GM12878 (cell line): ENCODE measurements at regions of chr6 and their contacts with region 1.

Region 1: GRCh38 chr6:136927292-136927691 is 5.2 kb downstream of the SLC35D3 start:
- DNase-seq: no peak
- ATAC-seq: peak; percentile 87
- H3K4me3 ChIP-seq: no peak overlapping the region
- H3K27ac ChIP-seq: no peak overlapping the region
- H3K4me1 ChIP-seq: no peaks in the 10 kb centered on the region
- H3K27me3 ChIP-seq: peaks cover 13% of the 10 kb centered on the region in 2 experiments
- CTCF ChIP-seq: peak; percentile 50 to 74 (median 55)
- EP300 ChIP-seq: no peak
- POLR2A ChIP-seq: no peak
- RAD21 ChIP-seq: peak; percentile 66

Region 2: GRCh38 chr6:136582711-136583471 is 344.4 kb before region 1 on chr6:
- CTCF ChIA-PET with region 1: no interaction called
- POLR2A ChIA-PET with region 1: no interaction called
- RAD21 ChIA-PET with region 1: no interaction called
- SMC1A ChIA-PET with region 1: no interaction called
- in situ Hi-C with region 1: no loop called
- intact Hi-C with region 1: loop called (anchors 10 kb)
- DNase-seq: no peak
- ATAC-seq: peak; percentile 73
- H3K4me3 ChIP-seq: no peak overlapping the region
- H3K27ac ChIP-seq: no peak overlapping the region
- H3K4me1 ChIP-seq: no peaks in the 10 kb centered on the region
- H3K27me3 ChIP-seq: no peaks in the 10 kb centered on the region
- CTCF ChIP-seq: peak; percentile 29 to 50 (median 48); a peak in 4 of 6 replicates
- EP300 ChIP-seq: no peak
- POLR2A ChIP-seq: no peak
- RAD21 ChIP-seq: peak; percentile 28; the same call in 1 of the 2 replicates

Region 3: GRCh38 chr6:136772685-136773472 is 154.4 kb before region 1 on chr6:
- CTCF ChIA-PET with region 1: no interaction called
- POLR2A ChIA-PET with region 1: no interaction called
- RAD21 ChIA-PET with region 1: no interaction called
- SMC1A ChIA-PET with region 1: no interaction called
- in situ Hi-C with region 1: no loop called
- intact Hi-C with region 1: no loop called
- DNase-seq: peak; percentile 93
- ATAC-seq: peak; percentile 75
- H3K4me3 ChIP-seq: peak overlapping the region; percentile 49
- H3K27ac ChIP-seq: peak overlapping the region; percentile 92
- H3K4me1 ChIP-seq: peaks cover 57% of the 10 kb centered on the region
- H3K27me3 ChIP-seq: no peaks in the 10 kb centered on the region
- CTCF ChIP-seq: no peak
- EP300 ChIP-seq: peak; percentile 50 to 93; a peak in 3 of 4 replicates
- POLR2A ChIP-seq: peak; percentile 38; the same call in 1 of the 2 replicates
- RAD21 ChIP-seq: no peak; the same call in 1 of the 2 replicates